ENCODE measurements at regions of chrX and their contacts with region 1.

Region 1: DNA sequence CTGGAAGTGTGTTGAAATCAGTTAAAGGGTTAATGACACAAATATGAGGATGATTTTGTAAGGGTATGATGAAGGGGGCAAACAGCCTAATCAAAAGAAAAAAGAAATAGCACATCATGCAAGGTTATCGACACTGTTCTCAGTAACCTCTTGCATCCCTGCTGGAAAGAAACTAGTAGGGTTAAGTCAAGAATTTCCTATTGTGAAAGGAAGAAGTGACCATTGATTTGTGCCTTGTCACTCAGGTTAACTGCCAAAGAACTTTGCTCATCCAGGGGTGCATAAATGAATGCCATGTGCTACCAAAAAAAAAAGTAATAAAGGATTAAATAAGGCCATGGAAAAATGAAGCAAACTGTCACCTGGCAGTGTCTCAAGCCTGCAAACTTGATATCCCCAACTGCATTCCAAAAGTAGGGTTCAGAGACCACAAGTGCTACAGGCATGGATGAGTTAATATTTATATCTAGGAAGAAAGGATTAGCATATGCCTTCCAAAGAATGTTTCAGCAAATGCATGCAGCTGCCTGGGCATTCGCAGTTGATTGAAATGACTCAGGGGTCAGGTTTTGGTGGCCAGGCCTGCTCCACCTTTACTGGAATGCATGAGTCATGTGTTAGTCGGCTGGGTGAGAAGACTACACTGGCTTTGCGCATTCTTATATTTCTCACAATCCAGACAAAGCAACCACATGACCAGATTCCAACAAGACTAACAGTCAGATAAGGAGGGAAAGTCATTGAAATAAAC is 78.4 kb upstream of the ATXN3L start:
- DNase-seq: peak; percentile 84 to 98
- H3K4me3 ChIP-seq: no peak overlapping the region
- H3K27ac ChIP-seq: peak overlapping the region; percentile 99
- H3K4me1 ChIP-seq: peaks cover 39% of the 10 kb centered on the region
- H3K27me3 ChIP-seq: no peaks in the 10 kb centered on the region
- CTCF ChIP-seq: no peak

Region 2: DNA sequence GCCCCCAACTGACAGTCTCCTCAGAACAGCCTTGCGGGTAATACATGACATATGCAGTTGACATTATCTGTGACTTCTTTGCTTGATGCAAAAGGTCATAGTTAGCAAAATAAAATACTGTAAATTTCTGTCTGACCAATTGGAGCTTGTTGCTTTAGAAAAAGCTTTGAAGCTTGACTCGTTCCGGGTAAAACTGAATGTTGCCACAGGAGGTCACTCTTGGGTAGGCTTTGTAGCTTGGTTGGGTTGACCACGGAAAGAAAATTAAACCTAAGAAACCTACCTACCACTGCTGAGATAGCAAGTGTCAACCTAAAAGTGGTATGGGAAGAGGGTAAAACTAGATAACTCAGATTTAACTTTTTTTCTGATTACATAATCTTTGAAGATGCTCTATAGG is 583.8 kb before region 1 on chrX:
- CTCF ChIA-PET with region 1: no interaction called
- POLR2A ChIA-PET with region 1: no interaction called
- intact Hi-C with region 1: loop called (anchors 1 kb)
- DNase-seq: peak; percentile 44 to 51
- H3K4me3 ChIP-seq: no peak overlapping the region
- H3K27ac ChIP-seq: no peak overlapping the region
- H3K4me1 ChIP-seq: no peaks in the 10 kb centered on the region
- H3K27me3 ChIP-seq: no peaks in the 10 kb centered on the region
- CTCF ChIP-seq: peak; percentile 75

Region 3: GRCh38 chrX:12974796-12975669 is 423.2 kb before region 1 on chrX and contains the start of gene TMSB4X:
- CTCF ChIA-PET with region 1: no interaction called
- POLR2A ChIA-PET with region 1: interaction called, 9 read pairs
- intact Hi-C with region 1: loop called (anchors 1 kb)
- DNase-seq: peak; percentile 71 to 85
- H3K4me3 ChIP-seq: peak within 1 kb of the TSS; percentile 99
- H3K27ac ChIP-seq: peak within 1 kb of the TSS; percentile 99
- H3K4me1 ChIP-seq: peaks cover 36% of the 10 kb centered on the region
- H3K27me3 ChIP-seq: no peaks in the 10 kb centered on the region
- CTCF ChIP-seq: no peak
- total RNA-seq, gene TMSB4X: 2,589 and 3,588 TPM in 2 replicates

Region 4: DNA sequence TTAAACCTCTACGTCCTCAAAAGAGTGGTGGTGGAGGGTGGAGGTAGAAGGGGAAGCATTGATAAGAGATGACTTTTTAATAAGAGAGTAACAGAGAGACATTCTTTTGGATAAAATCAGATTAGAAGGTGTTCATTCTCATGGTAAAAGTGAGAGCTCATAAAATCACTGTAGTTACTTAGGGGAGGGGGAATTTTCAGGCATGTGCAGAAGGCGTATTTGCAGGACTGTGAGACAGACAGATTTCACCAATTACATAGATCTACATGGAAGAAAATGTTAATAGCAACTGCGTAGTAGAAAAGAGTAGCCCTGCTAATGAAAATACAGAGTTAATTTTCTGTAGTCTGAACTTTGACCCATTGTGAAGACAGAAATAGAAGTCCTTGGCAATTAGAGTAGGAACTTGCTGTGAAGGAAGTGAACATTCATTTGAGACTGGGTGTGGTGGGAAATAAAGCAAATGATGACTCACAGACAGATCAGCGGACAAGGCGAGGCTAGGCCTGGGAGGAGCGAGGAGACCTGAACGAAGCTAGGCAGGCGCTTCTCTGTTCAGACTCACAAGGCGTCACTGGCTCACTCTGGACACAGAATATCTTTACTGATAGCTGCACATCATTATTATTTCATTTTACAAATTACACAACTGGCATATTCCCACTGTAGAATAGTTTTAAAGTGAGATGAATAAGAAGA is 296.7 kb before region 1 on chrX:
- CTCF ChIA-PET with region 1: no interaction called
- POLR2A ChIA-PET with region 1: no interaction called
- intact Hi-C with region 1: loop called (anchors 1 kb)
- DNase-seq: peak; percentile 72 to 93
- H3K4me3 ChIP-seq: no peak overlapping the region; the same call in 1 of the 2 replicates
- H3K27ac ChIP-seq: peak overlapping the region; percentile 96
- H3K4me1 ChIP-seq: peaks cover 48% of the 10 kb centered on the region
- H3K27me3 ChIP-seq: no peaks in the 10 kb centered on the region
- CTCF ChIP-seq: no peak

Region 5: GRCh38 chrX:13287816-13288215 is 110.4 kb before region 1 on chrX:
- CTCF ChIA-PET with region 1: interaction called, 3 read pairs
- POLR2A ChIA-PET with region 1: no interaction called
- intact Hi-C with region 1: loop called (anchors 1 kb)
- DNase-seq: peak; percentile 11 to 37
- H3K4me3 ChIP-seq: no peak overlapping the region
- H3K27ac ChIP-seq: peak overlapping the region; percentile 57
- H3K4me1 ChIP-seq: peaks cover 21% of the 10 kb centered on the region
- H3K27me3 ChIP-seq: no peaks in the 10 kb centered on the region
- CTCF ChIP-seq: no peak

Measured in PC-9 (cell line).